ENCODE measurements at regions of chr5 and their contacts with region 1.

Region 1: DNA sequence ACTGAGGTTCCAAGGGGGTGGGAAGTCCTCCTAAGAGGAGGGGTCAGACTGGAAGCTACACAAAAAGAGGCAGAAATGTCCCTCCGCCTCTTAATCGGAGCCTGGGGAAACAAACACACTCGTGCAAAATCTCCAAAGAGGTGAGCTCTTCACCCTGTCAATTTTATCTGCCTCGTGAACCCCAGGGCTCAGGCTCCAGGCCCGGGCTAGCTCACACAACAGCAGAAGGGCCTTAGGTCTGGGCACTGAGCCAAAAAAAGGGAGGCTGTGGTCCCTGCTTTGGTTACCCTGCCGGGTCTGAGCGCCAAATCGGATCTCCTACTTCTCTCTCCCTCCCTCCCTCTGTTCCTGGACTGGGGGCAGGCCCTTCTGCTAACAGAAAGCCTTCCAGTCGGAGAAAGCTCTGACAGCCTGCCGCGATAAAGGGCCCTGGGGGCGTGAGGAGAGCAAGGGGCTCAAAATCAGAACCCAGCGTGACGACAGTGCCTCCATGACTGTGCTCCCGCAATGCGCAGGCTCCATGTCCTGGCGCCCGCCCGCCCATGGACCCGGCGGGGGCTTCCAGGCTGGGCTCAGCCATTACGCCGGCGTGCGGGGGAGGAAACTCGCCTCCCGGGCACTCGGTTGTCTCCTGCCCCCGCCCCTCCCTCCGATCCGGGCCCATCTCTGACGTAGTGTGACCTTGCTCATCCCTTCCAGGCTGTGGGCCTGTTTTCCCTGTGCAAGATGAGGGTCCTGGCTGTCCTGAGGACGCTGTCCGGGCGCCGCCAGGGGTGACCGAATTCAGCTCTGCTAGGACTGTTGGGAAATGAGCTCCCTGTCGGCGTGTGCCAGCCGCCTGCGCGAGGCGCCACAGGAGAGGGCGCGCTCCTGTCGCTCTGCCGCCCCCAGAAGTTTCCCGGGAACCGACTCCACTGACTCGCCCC is 865 bp upstream of the SLC22A4 start:
- DNase-seq: peak; percentile 83
- H3K4me3 ChIP-seq: peak overlapping the region; percentile 16 to 56 (median 45)
- H3K27ac ChIP-seq: peak overlapping the region; percentile 95 to 98 (median 96)
- H3K4me1 ChIP-seq: peaks cover 12 to 20% of the 10 kb centered on the region in 2 donors
- H3K27me3 ChIP-seq: no peaks in the 10 kb centered on the region
- CTCF ChIP-seq: peak in 1 of 6 experiments; percentile 13
- POLR2A ChIP-seq: peak in 1 of 2 donors; percentile 2

Region 2: DNA sequence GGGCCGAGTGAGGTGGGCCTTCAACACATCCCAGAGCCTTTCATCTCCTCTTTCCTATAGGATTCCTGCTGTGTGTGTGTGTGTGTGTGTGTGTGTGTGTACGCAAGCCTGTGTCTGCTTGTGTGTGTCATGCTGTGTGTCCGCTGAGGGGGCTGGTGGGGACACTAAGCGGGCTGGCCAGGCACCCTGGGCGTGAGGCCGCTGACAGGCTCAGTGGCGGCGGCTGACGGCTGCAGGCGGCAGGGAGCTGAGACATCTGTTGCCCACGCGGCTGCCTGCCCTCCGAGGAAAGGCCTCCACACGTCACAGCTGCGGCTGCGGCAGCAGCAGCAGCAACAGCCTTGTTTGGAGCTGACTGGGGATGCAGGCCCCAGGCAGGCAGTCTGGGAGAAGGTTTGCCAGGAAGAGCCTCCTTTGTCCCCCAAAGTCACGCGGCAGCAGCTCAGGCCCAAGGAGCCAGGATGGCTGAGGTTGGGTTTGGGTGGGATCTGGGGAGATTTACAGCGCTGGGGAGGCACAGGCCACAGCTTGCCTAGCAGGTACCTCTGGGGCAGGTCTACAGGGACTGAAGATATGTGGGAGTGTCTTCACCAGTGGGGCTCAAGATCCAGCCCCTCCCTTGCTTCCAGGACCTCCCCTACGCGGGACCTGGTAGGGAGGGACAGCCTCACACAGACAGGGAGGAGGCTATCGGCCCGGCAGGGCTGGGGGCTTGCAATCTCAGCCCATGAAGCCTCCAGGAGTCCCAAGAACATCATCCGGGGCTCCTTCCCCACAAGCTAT is 34.1 kb before region 1 on chr5:
- intact Hi-C with region 1: loop called (anchors 5 kb)
- DNase-seq: peak; percentile 20 to 25
- H3K4me3 ChIP-seq: no peak overlapping the region
- H3K27ac ChIP-seq: peak overlapping the region in 2 of 3 donors; percentile 80 to 81
- H3K4me1 ChIP-seq: peaks cover 39 to 75% of the 10 kb centered on the region in 2 donors
- H3K27me3 ChIP-seq: no peaks in the 10 kb centered on the region
- CTCF ChIP-seq: no peak
- POLR2A ChIP-seq: no peak

Region 3: DNA sequence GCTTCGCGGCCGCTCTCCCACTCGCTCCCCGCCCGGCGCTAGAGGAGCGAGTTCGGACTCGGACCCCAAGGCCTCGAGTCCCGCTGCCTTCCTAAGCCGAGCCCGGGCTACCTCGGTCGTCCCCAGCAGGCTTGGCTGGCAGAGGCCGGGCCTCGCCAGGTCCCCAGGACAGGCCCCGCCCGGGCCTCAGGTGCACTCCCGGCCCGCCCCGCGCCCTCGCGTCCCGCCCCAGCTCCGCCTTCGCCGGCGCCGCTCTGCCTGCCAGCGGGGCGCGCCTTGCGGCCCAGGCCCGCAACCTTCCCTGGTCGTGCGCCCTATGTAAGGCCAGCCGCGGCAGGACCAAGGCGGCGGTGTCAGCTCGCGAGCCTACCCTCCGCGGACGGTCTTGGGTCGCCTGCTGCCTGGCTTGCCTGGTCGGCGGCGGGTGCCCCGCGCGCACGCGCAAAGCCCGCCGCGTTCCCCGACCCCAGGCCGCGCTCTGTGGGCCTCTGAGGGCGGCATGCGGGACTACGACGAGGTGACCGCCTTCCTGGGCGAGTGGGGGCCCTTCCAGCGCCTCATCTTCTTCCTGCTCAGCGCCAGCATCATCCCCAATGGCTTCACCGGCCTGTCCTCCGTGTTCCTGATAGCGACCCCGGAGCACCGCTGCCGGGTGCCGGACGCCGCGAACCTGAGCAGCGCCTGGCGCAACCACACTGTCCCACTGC is 76.3 kb after region 1 on chr5 and contains the start of gene SLC22A5:
- intact Hi-C with region 1: loop called (anchors 10 kb)
- DNase-seq: peak; percentile 84 to 86
- H3K4me3 ChIP-seq: peak within 1 kb of the TSS; percentile 42 to 85 (median 65)
- H3K27ac ChIP-seq: peak within 1 kb of the TSS; percentile 74 to 84 (median 78)
- H3K4me1 ChIP-seq: peaks cover 8 to 28% of the 10 kb centered on the region in 2 donors
- H3K27me3 ChIP-seq: no peaks in the 10 kb centered on the region
- CTCF ChIP-seq: peak in 1 of 6 experiments; percentile 1
- POLR2A ChIP-seq: peak in 1 of 2 donors; percentile 86
- total RNA-seq, gene SLC22A5: 18.1 to 28.3 (median 24.2) TPM

Measured in thyroid gland (tissue), 4 donors.